ENCODE measurements at regions of chr14 and their contacts with region 1.

Region 1: DNA sequence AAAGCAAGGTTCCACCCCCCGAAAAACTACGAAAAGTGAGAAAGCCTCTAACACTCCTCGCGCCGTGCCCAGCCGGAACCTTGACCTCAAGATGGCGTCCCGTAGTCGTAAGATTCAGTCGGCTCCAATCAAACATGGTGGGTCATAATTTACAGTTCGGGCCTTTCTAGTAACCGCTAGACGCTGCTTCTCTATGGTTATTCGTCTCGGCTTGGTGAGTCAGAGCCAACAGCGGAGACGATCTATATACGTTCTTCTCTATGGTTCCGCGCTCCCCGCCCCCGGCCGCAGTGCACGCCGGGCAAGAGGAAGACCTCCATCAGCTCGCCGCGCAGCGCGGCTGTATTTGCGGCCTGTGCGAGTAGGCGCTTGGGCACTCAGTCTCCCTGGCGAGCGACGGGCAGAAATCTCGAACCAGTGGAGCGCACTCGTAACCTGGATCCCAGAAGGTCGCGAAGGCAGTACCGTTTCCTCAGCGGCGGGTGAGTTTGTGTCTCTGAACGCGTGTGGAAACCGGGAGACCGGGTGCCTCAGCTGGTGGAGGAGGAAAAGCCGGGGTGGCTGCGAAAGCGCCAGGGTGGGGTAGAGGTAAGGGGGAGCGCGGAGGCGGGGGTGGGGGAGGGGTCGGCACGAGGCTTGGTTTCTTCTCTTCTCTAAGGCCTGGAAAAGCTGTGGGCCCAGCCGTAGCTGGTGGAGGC is at the start of gene RBM25:
- DNase-seq: peak; percentile 97
- ATAC-seq: peak; percentile 95
- H3K4me3 ChIP-seq: peak within 1 kb of the TSS; percentile 84
- H3K27ac ChIP-seq: peak within 1 kb of the TSS; percentile 89
- H3K4me1 ChIP-seq: 0 out of 2 replicates have a peak, but pooled peaks cover 3% of the 10 kb centered on the region
- H3K27me3 ChIP-seq: no peaks in the 10 kb centered on the region
- CTCF ChIP-seq: peak in 2 of 3 experiments; percentile 8 to 26; a peak in 3 of 6 replicates
- EP300 ChIP-seq: no peak
- POLR2A ChIP-seq: peak; percentile 100
- RAD21 ChIP-seq: no peak
- polyA plus RNA-seq, gene RBM25: 64.9 to 71.2 TPM

Region 2: DNA sequence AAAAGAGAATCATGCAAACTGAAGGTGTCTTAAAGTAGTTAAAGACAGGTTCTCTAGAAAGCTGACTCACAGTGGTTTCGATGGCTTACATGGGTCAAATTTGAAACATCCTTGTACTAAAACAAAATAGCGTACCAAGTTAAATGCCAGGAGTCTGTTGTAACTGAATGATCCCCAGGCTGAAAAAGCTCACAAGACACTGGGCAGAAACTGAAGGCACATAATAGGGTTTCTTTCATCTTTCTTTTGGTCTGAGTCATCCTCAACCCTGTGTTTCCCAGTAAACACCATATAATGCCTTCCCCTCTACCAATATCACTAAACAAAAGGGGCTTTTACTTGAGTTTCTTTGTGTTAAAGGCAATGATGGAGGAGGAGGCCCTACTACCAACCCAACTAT is 44.3 kb before region 1 on chr14:
- CTCF ChIA-PET with region 1: no interaction called
- POLR2A ChIA-PET with region 1: interaction called, 5 read pairs
- RAD21 ChIA-PET with region 1: interaction called, 5 read pairs
- SMC1A ChIA-PET with region 1: interaction called, 3 read pairs
- in situ Hi-C with region 1: no loop called
- intact Hi-C with region 1: loop called (anchors 5 kb)
- DNase-seq: peak; percentile 90
- ATAC-seq: peak; percentile 97
- H3K4me3 ChIP-seq: 0 out of 2 replicates have a peak overlapping the region, but pooled peaks have one; percentile 14
- H3K27ac ChIP-seq: peak overlapping the region; percentile 93
- H3K4me1 ChIP-seq: peaks cover 12% of the 10 kb centered on the region
- H3K27me3 ChIP-seq: no peaks in the 10 kb centered on the region
- CTCF ChIP-seq: no peak
- EP300 ChIP-seq: peak; percentile 68 to 79
- POLR2A ChIP-seq: no peak
- RAD21 ChIP-seq: no peak

Region 3: DNA sequence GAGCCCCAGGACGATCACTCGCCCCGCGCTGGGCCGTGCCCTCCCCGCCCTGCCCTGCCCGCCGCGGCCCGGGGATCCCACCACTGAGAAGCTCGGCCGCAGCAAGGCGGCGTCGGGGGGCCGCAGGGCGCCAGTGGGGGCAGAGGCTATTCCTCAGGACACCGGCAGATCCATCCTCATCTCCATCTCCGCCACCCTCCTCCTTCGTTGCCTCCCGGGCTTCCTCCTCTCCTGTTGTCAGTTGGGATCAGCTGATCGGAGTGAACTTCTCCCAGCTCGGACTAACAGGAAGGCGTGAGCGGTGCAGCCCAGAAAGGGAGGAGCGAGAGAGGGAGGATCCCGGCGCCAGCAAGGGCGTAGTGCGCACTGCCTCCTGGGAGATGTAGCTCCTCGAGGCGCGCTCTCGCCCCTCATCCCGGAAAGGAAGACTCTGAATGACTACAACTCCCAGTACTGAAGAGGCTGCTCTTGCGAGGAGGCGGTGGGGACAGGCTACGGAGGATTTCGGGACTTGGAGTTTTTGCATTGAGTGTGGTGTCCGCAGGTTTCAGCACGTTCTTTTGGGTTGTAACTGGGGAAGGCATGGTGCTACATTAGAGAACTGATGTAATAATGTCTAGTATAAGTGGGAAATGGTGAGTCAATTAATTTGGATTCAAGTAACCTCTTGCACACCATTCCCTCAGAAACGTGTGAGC is 31.4 kb before region 1 on chr14 and contains the start of gene ZFYVE1:
- CTCF ChIA-PET with region 1: interaction called, 3 read pairs
- POLR2A ChIA-PET with region 1: interaction called, 12 read pairs
- RAD21 ChIA-PET with region 1: interaction called, 14 read pairs
- SMC1A ChIA-PET with region 1: interaction called, 16 read pairs
- in situ Hi-C with region 1: no loop called
- intact Hi-C with region 1: loop called (anchors 1 kb)
- DNase-seq: peak; percentile 94
- ATAC-seq: peak; percentile 99
- H3K4me3 ChIP-seq: peak within 1 kb of the TSS; percentile 94
- H3K27ac ChIP-seq: peak within 1 kb of the TSS; percentile 52; the same call in 1 of the 2 replicates
- H3K4me1 ChIP-seq: no peaks in the 10 kb centered on the region
- H3K27me3 ChIP-seq: no peaks in the 10 kb centered on the region
- CTCF ChIP-seq: no peak
- EP300 ChIP-seq: no peak
- POLR2A ChIP-seq: peak; percentile 78
- RAD21 ChIP-seq: no peak
- polyA plus RNA-seq, gene ZFYVE1: 1.2 to 1.4 TPM

Region 4: GRCh38 chr14:73136387-73137225 is 78.2 kb after region 1 on chr14 and contains the start of gene PSEN1:
- CTCF ChIA-PET with region 1: no interaction called
- POLR2A ChIA-PET with region 1: interaction called, 7 read pairs
- RAD21 ChIA-PET with region 1: interaction called, 6 read pairs
- SMC1A ChIA-PET with region 1: interaction called, 3 read pairs
- in situ Hi-C with region 1: no loop called
- intact Hi-C with region 1: loop called (anchors 2 kb)
- DNase-seq: peak; percentile 79
- ATAC-seq: peak; percentile 93
- H3K4me3 ChIP-seq: peak within 1 kb of the TSS; percentile 95
- H3K27ac ChIP-seq: peak within 1 kb of the TSS; percentile 94
- H3K4me1 ChIP-seq: 0 out of 2 replicates have a peak, but pooled peaks cover 3% of the 10 kb centered on the region
- H3K27me3 ChIP-seq: no peaks in the 10 kb centered on the region
- CTCF ChIP-seq: no peak
- EP300 ChIP-seq: 0 out of 4 replicates have a peak, but pooled peaks of 1 of the 2 experiments have one; percentile 31
- POLR2A ChIP-seq: peak; percentile 94
- RAD21 ChIP-seq: no peak
- polyA plus RNA-seq, gene PSEN1: 8.9 to 10.1 TPM